ENCODE measurements at regions of chr1 and their contacts with region 1.

Region 1: DNA sequence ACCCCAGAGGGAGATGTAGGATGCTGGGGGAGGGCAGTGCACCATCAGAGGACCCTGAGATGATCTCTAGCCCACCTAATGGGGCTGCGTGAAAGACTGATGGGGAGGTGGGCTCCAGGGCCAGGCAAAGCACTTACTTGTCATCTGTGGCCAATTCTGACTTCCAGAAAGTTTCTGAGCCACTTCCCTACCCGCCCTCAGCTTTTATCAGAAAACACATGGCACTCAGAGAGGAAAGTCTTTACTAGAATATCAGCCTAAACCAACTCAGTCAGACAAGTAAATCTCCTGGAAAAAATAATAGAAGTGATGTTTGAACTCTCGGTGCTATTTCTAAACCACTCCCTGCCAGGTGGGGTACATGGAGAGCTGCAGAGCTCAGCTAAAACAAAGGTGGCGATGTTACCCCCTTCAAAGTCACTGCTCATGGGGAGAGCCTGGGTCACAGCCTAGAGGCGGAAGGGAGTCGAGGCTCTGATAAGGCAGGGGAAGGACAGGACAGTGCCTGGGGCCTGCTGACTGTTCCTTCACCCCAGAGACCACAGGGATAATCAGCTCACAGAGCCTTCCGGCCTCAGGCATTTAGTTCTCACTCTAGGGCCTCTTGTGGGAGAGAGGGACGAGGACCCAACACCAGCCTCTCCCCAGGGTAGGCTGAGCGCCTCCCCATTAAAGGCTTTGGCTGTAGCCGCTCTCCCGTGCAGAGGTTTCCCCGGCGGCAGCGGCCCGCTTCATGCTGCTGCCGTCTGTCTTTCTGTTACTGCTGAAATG is 14.2 kb downstream of the SMIM12 start:
- DNase-seq: peak in 1 of 2 donors; percentile 41
- H3K4me3 ChIP-seq: no peak overlapping the region
- H3K27ac ChIP-seq: peak overlapping the region in 1 of 5 donors; percentile 20
- H3K4me1 ChIP-seq: peaks cover 29 to 51% (median 36%) of the 10 kb centered on the region in 4 donors
- H3K27me3 ChIP-seq: no peaks in the 10 kb centered on the region
- CTCF ChIP-seq: no peak
- EP300 ChIP-seq: no peak
- POLR2A ChIP-seq: no peak

Region 2: DNA sequence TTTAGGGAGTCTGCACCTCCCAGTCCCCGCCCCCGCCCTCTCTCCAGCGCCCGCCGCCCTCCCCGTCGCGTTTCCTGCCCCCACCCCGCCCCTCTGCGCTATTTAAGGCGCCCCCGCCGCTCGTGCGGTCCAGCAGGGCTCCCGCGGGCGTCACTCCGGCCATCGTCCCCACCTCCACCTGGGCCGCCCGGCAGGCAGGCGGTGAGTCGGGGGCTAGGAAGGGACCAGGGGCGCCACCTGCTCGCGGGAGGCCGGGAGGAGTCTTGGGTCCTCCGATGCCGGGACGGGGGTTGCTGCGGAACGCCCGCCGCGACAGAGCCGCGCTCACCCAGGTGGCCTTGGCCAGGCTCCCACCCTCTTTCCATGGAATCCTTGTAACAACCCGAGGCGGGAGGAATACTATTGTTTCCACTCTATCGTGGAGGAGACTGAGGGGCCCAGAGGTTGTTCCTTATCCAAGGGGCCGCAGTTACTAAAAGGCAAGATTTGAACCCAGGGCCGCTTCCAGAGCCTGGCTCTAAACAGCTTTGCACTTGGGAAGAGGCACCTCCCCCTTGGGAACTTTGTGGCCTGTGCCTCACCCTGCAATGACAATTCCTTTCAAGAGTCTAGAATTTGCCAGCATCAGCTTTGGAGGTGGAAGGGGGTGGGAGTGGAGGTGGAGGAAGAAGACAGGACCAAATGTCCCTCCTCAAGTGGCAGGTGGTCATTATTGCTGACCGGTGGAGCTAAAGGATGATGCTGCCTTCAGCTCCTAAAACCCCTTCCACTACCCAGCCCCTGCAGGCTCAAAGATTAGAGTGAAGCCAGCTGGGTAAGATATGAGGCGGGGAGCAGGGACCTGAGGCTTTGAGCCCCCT is 52.2 kb before region 1 on chr1 and contains the start of gene GJA4:
- intact Hi-C with region 1: loop called (anchors 5 kb)
- DNase-seq: peak in 1 of 2 donors; percentile 49
- H3K4me3 ChIP-seq: peak within 1 kb of the TSS; percentile 14 to 48 (median 36)
- H3K27ac ChIP-seq: peak within 1 kb of the TSS; percentile 0 to 59 (median 52)
- H3K4me1 ChIP-seq: peaks cover 9 to 19% (median 10%) of the 10 kb centered on the region in 4 donors
- H3K27me3 ChIP-seq: peaks cover 6 to 47% (median 14%) of the 10 kb centered on the region in 3 donors
- CTCF ChIP-seq: no peak
- EP300 ChIP-seq: no peak
- POLR2A ChIP-seq: no peak
- total RNA-seq, gene GJA4: 1.7 to 4.8 (median 2.3) TPM in 3 of 5 donors, not detected in the others

Region 3: GRCh38 chr1:35255276-35255675 is 410.0 kb after region 1 on chr1:
- intact Hi-C with region 1: no loop called
- DNase-seq: no peak
- H3K4me3 ChIP-seq: no peak overlapping the region
- H3K27ac ChIP-seq: no peak overlapping the region
- H3K4me1 ChIP-seq: no peaks in the 10 kb centered on the region
- H3K27me3 ChIP-seq: no peaks in the 10 kb centered on the region
- CTCF ChIP-seq: no peak
- EP300 ChIP-seq: no peak
- POLR2A ChIP-seq: no peak